Dorsolateral prefrontal cortex (tissue), 120 donors: ENCODE measurements at regions of chr14 and their contacts with region 1.

Region 1: GRCh38 chr14:49892636-49893308 is at the start of gene ARF6:
- DNase-seq: peak; percentile 95 to 99 (median 97)
- H3K4me3 ChIP-seq: peak within 1 kb of the TSS; percentile 66 to 100 (median 97)
- H3K27ac ChIP-seq: peak within 1 kb of the TSS; percentile 89 to 100 (median 97)
- H3K27me3 ChIP-seq: no peaks in the 10 kb centered on the region
- CTCF ChIP-seq: peak in 49 of 56 donors; percentile 11 to 72 (median 40)
- total RNA-seq, gene ARF6: 16.6 to 28.7 (median 22.5) TPM

Region 2: GRCh38 chr14:49862089-49862673 is 30.6 kb before region 1 on chr14:
- intact Hi-C with region 1: loop called (anchors 2 kb)
- DNase-seq: peak; percentile 63 to 86 (median 78)
- H3K4me3 ChIP-seq: peak overlapping the region; percentile 40 to 95 (median 77)
- H3K27ac ChIP-seq: peak overlapping the region; percentile 81 to 100 (median 98)
- H3K27me3 ChIP-seq: no peaks in the 10 kb centered on the region
- CTCF ChIP-seq: peak; percentile 87 to 100 (median 99)

Region 3: GRCh38 chr14:50156111-50156510 is 263.3 kb after region 1 on chr14:
- intact Hi-C with region 1: no loop called
- DNase-seq: no peak
- H3K4me3 ChIP-seq: no peak overlapping the region
- H3K27ac ChIP-seq: no peak overlapping the region
- H3K27me3 ChIP-seq: no peaks in the 10 kb centered on the region
- CTCF ChIP-seq: no peak